ENCODE measurements at regions of chr6 and their contacts with region 1.

Region 1: DNA sequence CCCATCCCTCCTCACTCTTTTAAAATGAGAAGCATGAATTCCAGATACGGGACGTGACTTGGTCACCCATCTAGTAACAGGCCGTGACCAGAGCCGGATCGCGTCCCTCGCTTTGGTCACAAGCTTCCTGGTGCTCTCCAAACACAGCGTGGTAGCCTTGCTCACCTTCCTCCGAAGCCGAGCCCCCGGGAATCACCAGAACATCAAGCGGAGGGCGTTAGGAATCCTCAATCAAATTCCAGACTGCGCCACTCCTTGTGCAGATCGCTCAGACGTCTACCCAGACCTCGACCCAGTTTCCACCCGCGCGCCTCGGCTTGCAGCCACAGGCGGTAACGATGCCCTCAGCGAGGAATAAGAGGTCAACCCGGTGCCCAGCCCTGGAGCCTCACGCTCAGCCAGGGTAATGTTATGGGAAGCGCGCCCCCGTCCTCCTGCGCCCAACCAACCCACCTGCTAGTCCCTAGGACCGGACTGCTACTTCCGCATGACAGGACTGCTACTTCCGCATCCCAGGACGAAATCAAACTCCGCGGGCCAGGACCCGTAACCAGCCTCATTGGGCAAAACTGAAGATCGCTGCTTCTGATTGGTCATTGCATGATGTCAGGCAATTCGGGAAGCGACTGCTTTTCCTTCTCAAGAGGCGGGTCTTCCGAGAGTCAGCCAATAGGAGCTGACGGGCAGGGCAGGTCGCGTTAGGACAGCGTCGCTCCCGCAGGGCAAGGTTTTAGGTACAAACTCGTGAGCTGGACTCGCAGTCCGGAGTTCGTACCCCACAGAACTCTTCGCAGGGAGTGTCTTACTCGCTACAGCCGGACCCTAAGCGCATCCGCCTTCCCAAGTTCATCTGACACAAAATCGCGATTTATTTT is at the start of gene MTFR2:
- DNase-seq: peak; percentile 97
- ATAC-seq: peak; percentile 97
- H3K4me3 ChIP-seq: peak within 1 kb of the TSS; percentile 49 to 91 (median 83)
- H3K4me3 Mint-ChIP-seq: peak within 1 kb of the TSS; percentile 93
- H3K27ac ChIP-seq: peak within 1 kb of the TSS in 1 of 2 donors; percentile 20
- H3K27ac Mint-ChIP-seq: peak within 1 kb of the TSS; percentile 81
- H3K4me1 ChIP-seq: peaks cover 15 to 16% of the 10 kb centered on the region in 2 donors
- H3K4me1 Mint-ChIP-seq: peaks cover 33% of the 10 kb centered on the region
- H3K27me3 ChIP-seq: no peaks in the 10 kb centered on the region
- H3K27me3 Mint-ChIP-seq: no peaks in the 10 kb centered on the region
- CTCF ChIP-seq: no peak
- total RNA-seq, gene MTFR2: 3.9 and 4.0 TPM in 2 replicates

Region 2: DNA sequence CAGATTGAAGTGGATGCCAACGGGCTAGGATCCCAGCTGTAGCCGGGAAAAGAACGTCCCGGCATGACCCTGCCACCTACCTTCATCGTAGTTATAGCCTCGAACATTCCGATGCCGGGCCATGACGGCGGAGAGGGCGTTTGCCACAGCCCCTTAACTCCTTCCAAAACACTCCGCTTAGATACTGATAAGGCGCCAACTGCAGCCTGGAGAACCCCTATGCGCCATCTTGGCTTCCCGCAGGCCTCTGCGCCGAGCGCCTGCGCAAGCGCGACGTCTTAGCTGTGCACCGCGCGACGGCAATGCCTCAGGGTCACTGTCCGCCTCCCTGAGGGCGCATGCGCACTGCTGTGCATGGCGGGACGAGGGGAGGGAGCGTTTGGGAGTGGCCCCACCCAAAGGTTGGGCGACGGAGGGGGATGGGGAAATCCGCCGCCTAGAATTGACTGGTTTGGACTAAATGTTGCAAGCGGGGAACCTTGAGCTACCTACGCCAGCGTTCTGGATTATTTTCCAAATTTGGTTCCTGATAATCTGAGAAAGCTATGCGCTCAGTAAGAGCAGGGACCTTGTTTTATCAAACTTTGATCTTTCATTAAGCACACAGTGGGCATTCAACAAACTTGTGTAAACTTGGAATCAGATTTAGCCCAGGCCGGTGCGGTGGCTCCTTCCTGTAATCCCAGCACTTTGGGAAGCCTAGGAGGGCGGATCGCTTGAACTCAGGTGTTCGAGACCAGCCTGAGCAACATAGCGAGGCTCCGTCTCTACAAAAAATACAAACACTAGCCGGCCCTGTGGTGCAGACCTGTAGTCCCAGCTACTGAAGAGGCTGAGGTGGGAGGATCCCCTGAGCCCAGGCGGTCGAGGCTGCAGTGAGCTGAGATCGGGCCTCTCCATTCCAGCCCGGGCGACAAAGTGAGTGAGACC is 1195.2 kb before region 1 on chr6 and contains the start of gene HBS1L:
- CTCF ChIA-PET with region 1: no interaction called
- POLR2A ChIA-PET with region 1: no interaction called
- intact Hi-C with region 1: loop called (anchors 1 kb)
- DNase-seq: peak; percentile 99
- ATAC-seq: peak; percentile 98
- H3K4me3 ChIP-seq: peak within 1 kb of the TSS; percentile 68 to 98 (median 91)
- H3K4me3 Mint-ChIP-seq: peak within 1 kb of the TSS; percentile 95
- H3K27ac ChIP-seq: peak within 1 kb of the TSS; percentile 80 to 95
- H3K27ac Mint-ChIP-seq: peak within 1 kb of the TSS; percentile 95
- H3K4me1 ChIP-seq: peaks cover 16 to 19% of the 10 kb centered on the region in 2 donors
- H3K4me1 Mint-ChIP-seq: peaks cover 34% of the 10 kb centered on the region
- H3K27me3 ChIP-seq: no peaks in the 10 kb centered on the region
- H3K27me3 Mint-ChIP-seq: no peaks in the 10 kb centered on the region
- CTCF ChIP-seq: no peak
- total RNA-seq, gene HBS1L: 58.2 and 58.9 TPM in 2 replicates